Posterior vena cava (tissue), 2 donors: ENCODE measurements at regions of chr3 and their contacts with region 1.

Region 1: GRCh38 chr3:190608850-190609589 is 95.1 kb downstream of the IL1RAP start:
- DNase-seq: no peak

Region 2: DNA sequence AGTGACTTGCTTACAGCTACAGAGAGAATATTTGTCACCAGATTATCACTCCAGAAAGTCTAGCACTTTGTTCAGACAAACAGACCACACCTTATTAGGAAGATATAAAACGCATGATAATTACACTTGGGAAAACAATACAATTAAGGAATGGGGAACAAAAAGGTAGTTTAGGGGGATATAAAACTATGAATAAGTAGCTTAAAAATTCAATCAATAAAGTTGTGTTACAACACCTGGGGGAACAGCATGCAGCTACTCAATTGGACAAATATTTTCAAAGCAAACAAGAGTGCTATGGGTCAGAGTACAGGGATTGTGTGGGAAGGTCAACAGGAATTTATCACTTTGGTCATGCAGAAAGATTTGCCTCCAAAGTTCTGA is 301.9 kb before region 1 on chr3:
- intact Hi-C with region 1: no loop called
- DNase-seq: no peak

Region 3: GRCh38 chr3:191220908-191221307 is 611.9 kb after region 1 on chr3:
- intact Hi-C with region 1: loop called in 1 of 2 experiments (anchors 5 kb)
- DNase-seq: no peak